CD8-positive, alpha-beta T cell (primary cell): ENCODE measurements at regions of chr10 and their contacts with region 1.

Region 1: DNA sequence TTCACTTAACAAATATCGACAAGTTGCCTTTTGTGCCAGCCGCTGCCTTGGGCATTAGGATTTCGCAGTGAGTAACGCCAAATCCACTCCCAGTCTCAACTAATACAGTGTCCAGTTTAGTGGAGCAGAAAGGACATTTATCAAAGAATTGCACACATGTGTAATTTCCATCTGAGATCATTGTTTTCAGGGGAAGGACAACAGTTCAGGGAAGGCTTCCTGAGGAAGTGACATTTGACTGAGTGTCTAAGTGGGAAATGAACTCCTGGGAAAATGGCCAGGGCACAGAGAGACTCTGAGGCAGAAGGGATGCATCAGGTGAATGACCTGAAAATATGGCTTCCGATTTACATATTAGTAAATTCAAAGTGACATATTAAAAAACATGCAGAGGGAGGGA is 89.4 kb downstream of the ITGA8 start:
- DNase-seq: no peak
- ATAC-seq: no peak
- H3K4me3 ChIP-seq: no peak overlapping the region
- H3K4me3 Mint-ChIP-seq: no peak overlapping the region
- H3K27ac ChIP-seq: no peak overlapping the region
- H3K27ac Mint-ChIP-seq: no peak overlapping the region
- H3K4me1 ChIP-seq: no peaks in the 10 kb centered on the region
- H3K4me1 Mint-ChIP-seq: no peaks in the 10 kb centered on the region
- H3K27me3 ChIP-seq: no peaks in the 10 kb centered on the region
- H3K27me3 Mint-ChIP-seq: no peaks in the 10 kb centered on the region
- CTCF ChIP-seq: no peak

Region 2: GRCh38 chr10:15585303-15585715 is 45.0 kb before region 1 on chr10:
- CTCF ChIA-PET with region 1: no interaction called
- POLR2A ChIA-PET with region 1: no interaction called
- intact Hi-C with region 1: no loop called
- DNase-seq: peak in 3 of 9 experiments; percentile 11 to 21 (median 13)
- ATAC-seq: no peak
- H3K4me3 ChIP-seq: no peak overlapping the region
- H3K4me3 Mint-ChIP-seq: no peak overlapping the region
- H3K27ac ChIP-seq: no peak overlapping the region
- H3K27ac Mint-ChIP-seq: no peak overlapping the region
- H3K4me1 ChIP-seq: no peaks in the 10 kb centered on the region
- H3K4me1 Mint-ChIP-seq: no peaks in the 10 kb centered on the region
- H3K27me3 ChIP-seq: no peaks in the 10 kb centered on the region
- H3K27me3 Mint-ChIP-seq: peaks cover 6% of the 10 kb centered on the region
- CTCF ChIP-seq: no peak

Region 3: DNA sequence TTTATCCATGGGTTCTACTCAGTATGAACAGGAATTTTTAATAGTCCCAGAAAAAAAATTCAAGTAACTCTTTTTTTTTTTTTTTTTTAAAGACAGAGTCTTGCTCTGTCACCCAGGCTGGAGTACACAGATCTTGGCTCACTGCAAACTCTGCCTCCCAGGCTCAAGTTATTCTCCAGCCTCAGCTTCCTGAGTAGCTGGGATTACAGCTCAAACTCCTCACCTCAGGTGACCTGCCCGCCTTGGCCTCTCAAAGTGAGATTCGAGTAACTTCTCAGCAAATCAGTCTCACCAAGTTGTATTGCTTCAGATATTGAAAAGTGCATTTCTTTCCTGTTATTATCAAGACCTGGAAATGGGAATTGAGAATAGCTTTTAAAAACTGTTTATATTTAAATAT is 511.1 kb after region 1 on chr10:
- CTCF ChIA-PET with region 1: no interaction called
- POLR2A ChIA-PET with region 1: no interaction called
- intact Hi-C with region 1: no loop called
- DNase-seq: no peak
- ATAC-seq: no peak
- H3K4me3 ChIP-seq: no peak overlapping the region
- H3K4me3 Mint-ChIP-seq: no peak overlapping the region
- H3K27ac ChIP-seq: no peak overlapping the region
- H3K27ac Mint-ChIP-seq: no peak overlapping the region
- H3K4me1 ChIP-seq: no peaks in the 10 kb centered on the region
- H3K4me1 Mint-ChIP-seq: no peaks in the 10 kb centered on the region
- H3K27me3 ChIP-seq: no peaks in the 10 kb centered on the region
- H3K27me3 Mint-ChIP-seq: no peaks in the 10 kb centered on the region
- CTCF ChIP-seq: no peak

Region 4: GRCh38 chr10:16378496-16378895 is 748.1 kb after region 1 on chr10:
- CTCF ChIA-PET with region 1: no interaction called
- POLR2A ChIA-PET with region 1: no interaction called
- intact Hi-C with region 1: loop called in 1 of 2 experiments (anchors 5 kb)
- DNase-seq: no peak
- ATAC-seq: no peak
- H3K4me3 ChIP-seq: no peak overlapping the region
- H3K4me3 Mint-ChIP-seq: no peak overlapping the region
- H3K27ac ChIP-seq: no peak overlapping the region
- H3K27ac Mint-ChIP-seq: no peak overlapping the region
- H3K4me1 ChIP-seq: no peaks in the 10 kb centered on the region
- H3K4me1 Mint-ChIP-seq: no peaks in the 10 kb centered on the region
- H3K27me3 ChIP-seq: peaks cover 0 to 4% of the 10 kb centered on the region in 2 experiments
- H3K27me3 Mint-ChIP-seq: peaks cover 3% of the 10 kb centered on the region
- CTCF ChIP-seq: no peak